Activated CD4-positive, alpha-beta T cell treated with anti-CD3 and anti-CD28 coated beads for 36 hours (primary cell): ENCODE measurements at regions of chr19 and their contacts with region 1.

Region 1: GRCh38 chr19:2289714-2290435 is 7.9 kb upstream of the PEAK3 start:
- DNase-seq: peak; percentile 67
- ATAC-seq: peak; percentile 65
- H3K4me3 Mint-ChIP-seq: peak overlapping the region; percentile 67
- H3K27ac Mint-ChIP-seq: peak overlapping the region; percentile 62
- H3K4me1 Mint-ChIP-seq: peaks cover 17% of the 10 kb centered on the region
- H3K27me3 Mint-ChIP-seq: peaks cover 10% of the 10 kb centered on the region

Region 2: GRCh38 chr19:1947329-1948209 is 342.3 kb before region 1 on chr19:
- CTCF ChIA-PET with region 1: no interaction called
- POLR2A ChIA-PET with region 1: no interaction called
- intact Hi-C with region 1: no loop called
- DNase-seq: no peak
- ATAC-seq: no peak
- H3K4me3 Mint-ChIP-seq: no peak overlapping the region
- H3K27ac Mint-ChIP-seq: no peak overlapping the region
- H3K4me1 Mint-ChIP-seq: peaks cover 27% of the 10 kb centered on the region
- H3K27me3 Mint-ChIP-seq: no peaks in the 10 kb centered on the region

Region 3: GRCh38 chr19:2253106-2254053 is 36.5 kb before region 1 on chr19:
- CTCF ChIA-PET with region 1: no interaction called
- POLR2A ChIA-PET with region 1: no interaction called
- intact Hi-C with region 1: loop called in 1 of 2 experiments (anchors 1 kb)
- DNase-seq: peak; percentile 69
- ATAC-seq: peak; percentile 23
- H3K4me3 Mint-ChIP-seq: peak overlapping the region; percentile 49
- H3K27ac Mint-ChIP-seq: no peak overlapping the region
- H3K4me1 Mint-ChIP-seq: peaks cover 24% of the 10 kb centered on the region
- H3K27me3 Mint-ChIP-seq: peaks cover 4% of the 10 kb centered on the region

Region 4: DNA sequence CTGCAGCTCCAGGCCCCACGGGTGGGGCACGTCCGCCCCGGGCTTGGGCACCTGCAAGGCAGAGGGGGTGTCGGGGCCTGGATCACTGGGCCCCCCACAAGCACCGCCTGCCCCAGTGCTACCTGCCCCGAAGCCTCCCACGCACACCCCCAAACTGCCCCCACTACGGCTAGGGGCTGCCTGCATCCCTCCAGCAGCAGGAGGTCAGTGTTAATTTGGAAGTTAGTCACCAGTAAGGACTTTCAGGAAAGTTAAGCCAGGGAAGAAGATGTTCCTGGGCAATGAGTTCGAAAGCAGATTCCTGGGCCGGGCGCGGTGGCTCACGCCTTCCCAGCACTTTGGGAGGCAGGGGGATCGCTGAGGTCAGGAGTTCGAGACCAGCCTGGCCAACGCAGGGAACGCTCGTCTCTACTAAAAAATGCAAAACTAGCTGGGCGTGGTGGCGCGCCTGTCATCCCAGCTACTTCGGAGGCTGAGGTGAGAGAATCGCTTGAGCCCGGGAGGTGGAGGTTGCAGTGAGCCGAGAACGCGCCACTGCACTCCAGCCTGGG is 13.4 kb before region 1 on chr19:
- CTCF ChIA-PET with region 1: interaction called, 8 read pairs
- POLR2A ChIA-PET with region 1: interaction called, 18 read pairs
- intact Hi-C with region 1: no loop called
- DNase-seq: no peak
- ATAC-seq: no peak
- H3K4me3 Mint-ChIP-seq: no peak overlapping the region
- H3K27ac Mint-ChIP-seq: no peak overlapping the region
- H3K4me1 Mint-ChIP-seq: peaks cover 23% of the 10 kb centered on the region
- H3K27me3 Mint-ChIP-seq: no peaks in the 10 kb centered on the region